CD4-positive, alpha-beta T cell (primary cell): ENCODE measurements at regions of chr15 and their contacts with region 1.

Region 1: DNA sequence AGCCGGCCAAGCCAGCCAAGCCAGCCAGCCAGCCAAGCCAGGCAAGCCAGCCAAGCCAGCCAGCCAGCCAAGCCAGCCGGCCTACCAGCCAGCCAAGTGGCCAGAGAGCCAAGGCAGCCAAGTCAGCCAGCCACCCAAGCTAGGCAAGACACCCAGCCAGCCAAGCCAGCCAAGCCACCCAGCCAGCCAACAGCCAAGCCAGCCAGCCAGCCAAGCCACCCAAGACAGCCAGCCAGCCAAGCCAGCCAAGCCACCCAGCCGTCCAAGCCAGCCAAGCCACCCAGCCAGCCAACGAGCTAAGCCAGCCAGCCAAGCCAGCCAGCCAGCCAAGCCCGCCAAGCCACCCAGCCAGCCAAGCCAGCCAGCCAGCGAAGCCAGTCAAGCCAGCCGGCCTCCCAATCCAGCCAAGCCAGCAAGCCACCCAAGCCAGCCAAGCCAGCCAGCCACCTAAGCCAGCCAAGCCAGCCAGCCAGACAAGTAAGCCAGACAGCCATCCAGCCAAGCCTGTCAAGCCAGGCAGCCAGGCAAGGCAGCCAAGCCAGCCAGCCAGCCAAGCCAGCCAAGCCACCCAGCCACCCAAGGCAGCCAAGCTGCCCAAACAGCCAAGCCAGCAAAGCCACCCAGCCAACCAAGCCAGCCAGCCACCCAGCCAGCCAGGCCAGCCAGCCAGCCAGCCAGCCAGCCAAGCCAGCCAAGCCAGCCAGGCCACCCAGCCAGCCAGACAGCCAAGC is 200.5 kb downstream of the GOLGA6L6 start:
- DNase-seq: peak in 8 of 14 experiments; percentile 21 to 64 (median 51)
- ATAC-seq: no peak
- H3K4me3 ChIP-seq: no peak overlapping the region
- H3K4me3 Mint-ChIP-seq: no peak overlapping the region
- H3K27ac ChIP-seq: no peak overlapping the region
- H3K27ac Mint-ChIP-seq: no peak overlapping the region
- H3K4me1 ChIP-seq: peaks cover 5% of the 10 kb centered on the region
- H3K4me1 Mint-ChIP-seq: no peaks in the 10 kb centered on the region
- H3K27me3 ChIP-seq: peaks cover 0 to 5% of the 10 kb centered on the region in 2 experiments
- H3K27me3 Mint-ChIP-seq: no peaks in the 10 kb centered on the region
- CTCF ChIP-seq: no peak

Region 2: DNA sequence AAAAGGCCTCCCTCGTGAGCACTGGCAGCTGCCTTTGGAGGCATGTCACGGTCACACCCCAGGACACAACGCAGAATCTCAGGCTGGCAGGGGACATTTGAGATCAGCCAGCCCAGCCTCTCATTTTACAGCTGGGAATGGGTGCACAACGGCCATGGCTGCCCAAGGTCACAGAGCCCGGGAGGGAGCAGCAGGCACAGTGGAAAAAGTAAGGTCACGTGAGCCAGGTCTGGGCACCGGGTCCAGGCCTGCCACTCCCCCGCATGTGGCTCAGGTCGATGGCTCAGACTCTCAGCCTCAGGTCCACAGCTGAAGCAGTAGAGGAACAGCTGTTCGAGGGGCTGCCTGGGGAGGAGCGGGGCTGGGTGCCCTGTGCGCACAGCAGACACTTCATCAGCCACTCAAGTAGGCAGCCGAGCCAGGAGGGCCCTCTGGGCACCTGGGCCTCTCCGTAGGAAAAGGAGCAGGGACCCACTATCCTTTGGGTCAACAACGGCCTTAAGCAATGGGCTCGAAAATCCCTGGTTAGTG is 60.1 kb before region 1 on chr15:
- CTCF ChIA-PET with region 1: no interaction called
- POLR2A ChIA-PET with region 1: no interaction called
- intact Hi-C with region 1: loop called in 1 of 2 experiments (anchors 10 kb)
- DNase-seq: no peak
- ATAC-seq: no peak
- H3K4me3 ChIP-seq: no peak overlapping the region
- H3K4me3 Mint-ChIP-seq: no peak overlapping the region
- H3K27ac ChIP-seq: no peak overlapping the region
- H3K27ac Mint-ChIP-seq: no peak overlapping the region
- H3K4me1 ChIP-seq: no peaks in the 10 kb centered on the region
- H3K4me1 Mint-ChIP-seq: no peaks in the 10 kb centered on the region
- H3K27me3 ChIP-seq: no peaks in the 10 kb centered on the region
- H3K27me3 Mint-ChIP-seq: no peaks in the 10 kb centered on the region
- CTCF ChIP-seq: no peak

Region 3: GRCh38 chr15:20376872-20377271 is 35.8 kb after region 1 on chr15:
- CTCF ChIA-PET with region 1: no interaction called
- POLR2A ChIA-PET with region 1: no interaction called
- intact Hi-C with region 1: loop called in 1 of 2 experiments (anchors 5 kb)
- DNase-seq: no peak
- ATAC-seq: no peak
- H3K4me3 ChIP-seq: no peak overlapping the region
- H3K4me3 Mint-ChIP-seq: no peak overlapping the region
- H3K27ac ChIP-seq: no peak overlapping the region
- H3K27ac Mint-ChIP-seq: no peak overlapping the region
- H3K4me1 ChIP-seq: no peaks in the 10 kb centered on the region
- H3K4me1 Mint-ChIP-seq: no peaks in the 10 kb centered on the region
- H3K27me3 ChIP-seq: no peaks in the 10 kb centered on the region
- H3K27me3 Mint-ChIP-seq: no peaks in the 10 kb centered on the region
- CTCF ChIP-seq: no peak

Region 4: DNA sequence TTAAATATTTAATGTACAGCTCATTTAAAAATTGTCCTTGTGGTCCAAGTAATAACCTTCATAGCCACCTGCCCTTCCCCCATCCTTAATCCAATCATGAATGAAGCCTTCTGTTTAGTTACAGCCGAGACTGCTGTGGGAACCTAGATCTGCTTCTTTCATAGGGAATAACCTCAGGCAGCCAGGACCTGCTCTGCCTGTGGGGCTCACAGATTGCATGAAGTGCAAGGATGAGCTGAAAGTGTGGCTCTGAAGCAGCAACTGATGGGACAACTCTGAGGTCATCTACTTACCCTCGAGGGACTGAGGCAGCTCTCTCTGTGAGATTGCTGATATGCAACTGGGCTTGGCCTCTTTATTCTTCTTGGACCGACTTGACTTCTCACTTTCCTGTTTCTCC is 929.4 kb after region 1 on chr15:
- CTCF ChIA-PET with region 1: no interaction called
- POLR2A ChIA-PET with region 1: no interaction called
- intact Hi-C with region 1: no loop called
- DNase-seq: no peak
- ATAC-seq: no peak
- H3K4me3 ChIP-seq: no peak overlapping the region
- H3K4me3 Mint-ChIP-seq: no peak overlapping the region
- H3K27ac ChIP-seq: no peak overlapping the region
- H3K27ac Mint-ChIP-seq: no peak overlapping the region
- H3K4me1 ChIP-seq: no peaks in the 10 kb centered on the region
- H3K4me1 Mint-ChIP-seq: no peaks in the 10 kb centered on the region
- H3K27me3 ChIP-seq: peaks cover 2 to 4% of the 10 kb centered on the region in 2 experiments
- H3K27me3 Mint-ChIP-seq: peaks cover 8% of the 10 kb centered on the region
- CTCF ChIP-seq: no peak